Body of pancreas (tissue), 4 donors: ENCODE measurements at regions of chr3 and their contacts with region 1.

Region 1: GRCh38 chr3:53195602-53196574 is 34.9 kb downstream of the PRKCD start:
- DNase-seq: peak; percentile 43 to 58 (median 53)
- ATAC-seq: peak; percentile 64
- H3K4me3 ChIP-seq: no peak overlapping the region
- H3K27ac ChIP-seq: no peak overlapping the region
- H3K4me1 ChIP-seq: peaks cover 14% of the 10 kb centered on the region
- H3K27me3 ChIP-seq: no peaks in the 10 kb centered on the region
- CTCF ChIP-seq: peak; percentile 94 to 100 (median 95)
- POLR2A ChIP-seq: no peak

Region 2: DNA sequence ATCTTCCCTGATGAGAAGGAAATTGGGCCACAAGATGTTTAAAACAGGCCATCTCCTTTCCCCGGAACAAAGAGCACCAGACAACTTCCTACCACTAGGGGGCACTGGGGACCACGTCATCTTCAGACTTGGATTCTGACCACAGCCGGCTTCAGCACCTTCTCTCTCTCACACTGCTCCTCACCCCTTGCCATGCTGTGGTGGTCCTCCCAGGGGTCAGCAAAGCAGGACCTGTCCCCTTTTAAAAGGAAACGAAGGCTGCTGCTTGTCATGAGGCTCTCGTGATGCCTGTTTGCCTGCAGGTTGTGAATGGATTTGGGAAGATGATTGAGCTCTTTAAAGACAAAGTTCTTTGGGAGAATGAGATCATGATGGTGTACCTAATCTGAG is 81.9 kb before region 1 on chr3:
- intact Hi-C with region 1: loop called (anchors 5 kb)
- DNase-seq: peak; percentile 84 to 86 (median 86)
- ATAC-seq: peak; percentile 89
- H3K4me3 ChIP-seq: no peak overlapping the region
- H3K27ac ChIP-seq: no peak overlapping the region
- H3K4me1 ChIP-seq: peaks cover 18% of the 10 kb centered on the region
- H3K27me3 ChIP-seq: no peaks in the 10 kb centered on the region
- CTCF ChIP-seq: peak; percentile 82 to 94 (median 92)
- POLR2A ChIP-seq: no peak

Region 3: GRCh38 chr3:53320697-53321096 is 124.8 kb after region 1 on chr3:
- intact Hi-C with region 1: no loop called
- DNase-seq: no peak
- ATAC-seq: no peak
- H3K4me3 ChIP-seq: no peak overlapping the region
- H3K27ac ChIP-seq: no peak overlapping the region
- H3K4me1 ChIP-seq: peaks cover 14% of the 10 kb centered on the region
- H3K27me3 ChIP-seq: no peaks in the 10 kb centered on the region
- CTCF ChIP-seq: no peak
- POLR2A ChIP-seq: no peak